SK-N-SH (cell line): ENCODE measurements at regions of chr5 and their contacts with region 1.

Region 1: GRCh38 chr5:141524604-141525597 is 36.0 kb downstream of the PCDHGC5 start:
- DNase-seq: peak; percentile 79
- H3K4me3 ChIP-seq: peak overlapping the region; percentile 23 to 52; a peak in 3 of 4 replicates
- H3K27ac ChIP-seq: peak overlapping the region; percentile 99 to 100
- H3K4me1 ChIP-seq: peaks cover 36 to 70% of the 10 kb centered on the region in 2 experiments
- H3K27me3 ChIP-seq: no peaks in the 10 kb centered on the region
- CTCF ChIP-seq: peak; percentile 100
- EP300 ChIP-seq: peak; percentile 81 to 86; a peak in 3 of 4 replicates
- RAD21 ChIP-seq: peak; percentile 98

Region 2: DNA sequence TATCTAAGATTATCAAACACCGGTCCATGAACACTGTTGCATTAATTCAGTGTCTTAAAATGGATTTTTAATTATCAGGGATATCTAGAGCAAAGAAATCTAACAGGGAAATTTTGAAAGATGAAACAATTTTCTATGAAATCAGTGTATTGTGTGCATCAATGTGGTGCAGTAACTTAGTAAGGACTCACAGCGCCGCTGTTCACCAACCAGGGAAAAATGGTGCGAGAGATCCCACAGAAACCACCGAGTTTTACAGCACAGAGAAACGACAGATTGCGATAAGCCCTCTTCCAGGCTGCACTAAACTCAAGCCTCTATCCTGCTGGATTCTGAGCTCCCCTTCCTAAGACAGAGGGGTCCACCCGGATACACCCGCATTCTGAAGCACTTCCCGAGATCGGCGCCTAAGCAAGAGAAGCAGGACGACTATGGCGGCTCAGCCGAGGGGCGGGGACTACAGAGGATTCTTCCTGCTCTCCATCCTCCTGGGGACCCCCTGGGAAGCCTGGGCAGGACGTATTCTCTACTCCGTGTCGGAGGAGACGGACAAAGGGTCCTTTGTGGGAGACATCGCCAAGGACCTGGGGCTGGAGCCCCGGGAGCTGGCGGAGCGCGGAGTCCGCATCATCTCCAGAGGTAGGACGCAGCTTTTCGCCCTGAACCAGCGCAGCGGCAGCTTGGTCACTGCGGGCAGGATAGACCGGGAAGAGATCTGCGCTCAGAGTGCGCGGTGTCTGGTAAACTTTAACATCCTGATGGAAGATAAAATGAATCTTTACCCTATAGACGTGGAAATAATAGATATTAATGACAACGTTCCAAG is 142.2 kb before region 1 on chr5 and contains the start of gene PCDHGA7:
- CTCF ChIA-PET with region 1: interaction called, 13 read pairs
- POLR2A ChIA-PET with region 1: no interaction called
- DNase-seq: peak; percentile 70
- H3K4me3 ChIP-seq: peak within 1 kb of the TSS; percentile 53 to 62
- H3K27ac ChIP-seq: peak within 1 kb of the TSS; percentile 55 to 83
- H3K4me1 ChIP-seq: no peaks in the 10 kb centered on the region; a peak in 1 of 4 replicates
- H3K27me3 ChIP-seq: no peaks in the 10 kb centered on the region
- CTCF ChIP-seq: peak; percentile 65
- EP300 ChIP-seq: no peak
- RAD21 ChIP-seq: peak; percentile 83
- polyA plus RNA-seq, gene PCDHGA7: 3.4 and 7.8 TPM in 2 replicates

Region 3: GRCh38 chr5:141475625-141476131 is 49.2 kb before region 1 on chr5 and contains the start of gene PCDHGC3:
- CTCF ChIA-PET with region 1: interaction called, 117 read pairs
- POLR2A ChIA-PET with region 1: interaction called, 6 read pairs
- DNase-seq: peak; percentile 90
- H3K4me3 ChIP-seq: peak within 1 kb of the TSS; percentile 82 to 85
- H3K27ac ChIP-seq: peak within 1 kb of the TSS; percentile 92 to 94
- H3K4me1 ChIP-seq: peaks cover 6 to 34% of the 10 kb centered on the region in 2 experiments; a peak in 3 of 4 replicates
- H3K27me3 ChIP-seq: no peaks in the 10 kb centered on the region
- CTCF ChIP-seq: peak; percentile 45
- EP300 ChIP-seq: peak in 1 of 2 experiments; percentile 38; a peak in 1 of 4 replicates
- RAD21 ChIP-seq: peak; percentile 85
- polyA plus RNA-seq, gene PCDHGC3: 55.8 and 97.0 TPM in 2 replicates

Region 4: DNA sequence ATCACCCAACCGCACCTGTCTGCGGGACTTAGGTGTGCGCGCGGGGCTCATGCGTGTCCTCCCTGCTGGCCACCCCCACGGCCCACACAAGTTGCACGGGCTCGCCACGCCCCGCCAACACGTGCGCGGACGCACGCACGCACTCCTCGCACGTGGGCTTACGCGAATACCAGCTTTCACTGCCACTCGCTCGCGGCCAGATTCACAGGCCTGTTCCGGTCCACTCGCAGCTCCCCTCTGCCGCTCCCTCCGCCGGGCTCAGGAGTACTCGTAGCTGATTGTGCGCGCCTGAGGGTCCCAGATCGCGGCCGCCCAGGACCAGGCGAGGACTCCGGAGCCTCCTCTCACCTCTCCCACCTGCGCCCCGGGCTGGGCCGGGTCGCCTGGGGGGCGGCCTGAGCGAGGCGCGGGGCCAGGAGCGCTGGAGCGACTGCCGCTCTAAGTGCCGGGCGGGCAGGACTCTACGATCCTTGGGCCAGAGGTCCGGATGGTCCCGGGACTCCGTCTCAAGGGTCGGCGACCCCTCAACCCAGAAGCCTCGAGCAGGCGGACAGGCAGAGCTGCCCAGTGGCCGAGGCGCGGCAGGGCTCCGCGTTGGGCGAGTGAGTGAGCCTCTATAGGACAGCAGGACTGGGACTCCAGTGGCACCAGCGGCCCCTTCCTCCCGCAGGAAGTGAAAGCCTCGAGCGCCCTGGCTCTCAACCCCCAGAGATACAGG is 32.6 kb before region 1 on chr5:
- CTCF ChIA-PET with region 1: interaction called, 11 read pairs
- POLR2A ChIA-PET with region 1: no interaction called
- DNase-seq: no peak
- H3K4me3 ChIP-seq: no peak overlapping the region
- H3K27ac ChIP-seq: no peak overlapping the region
- H3K4me1 ChIP-seq: peaks cover 15 to 52% of the 10 kb centered on the region in 2 experiments; a peak in 3 of 4 replicates
- H3K27me3 ChIP-seq: no peaks in the 10 kb centered on the region
- CTCF ChIP-seq: no peak
- EP300 ChIP-seq: no peak
- RAD21 ChIP-seq: no peak

Region 5: DNA sequence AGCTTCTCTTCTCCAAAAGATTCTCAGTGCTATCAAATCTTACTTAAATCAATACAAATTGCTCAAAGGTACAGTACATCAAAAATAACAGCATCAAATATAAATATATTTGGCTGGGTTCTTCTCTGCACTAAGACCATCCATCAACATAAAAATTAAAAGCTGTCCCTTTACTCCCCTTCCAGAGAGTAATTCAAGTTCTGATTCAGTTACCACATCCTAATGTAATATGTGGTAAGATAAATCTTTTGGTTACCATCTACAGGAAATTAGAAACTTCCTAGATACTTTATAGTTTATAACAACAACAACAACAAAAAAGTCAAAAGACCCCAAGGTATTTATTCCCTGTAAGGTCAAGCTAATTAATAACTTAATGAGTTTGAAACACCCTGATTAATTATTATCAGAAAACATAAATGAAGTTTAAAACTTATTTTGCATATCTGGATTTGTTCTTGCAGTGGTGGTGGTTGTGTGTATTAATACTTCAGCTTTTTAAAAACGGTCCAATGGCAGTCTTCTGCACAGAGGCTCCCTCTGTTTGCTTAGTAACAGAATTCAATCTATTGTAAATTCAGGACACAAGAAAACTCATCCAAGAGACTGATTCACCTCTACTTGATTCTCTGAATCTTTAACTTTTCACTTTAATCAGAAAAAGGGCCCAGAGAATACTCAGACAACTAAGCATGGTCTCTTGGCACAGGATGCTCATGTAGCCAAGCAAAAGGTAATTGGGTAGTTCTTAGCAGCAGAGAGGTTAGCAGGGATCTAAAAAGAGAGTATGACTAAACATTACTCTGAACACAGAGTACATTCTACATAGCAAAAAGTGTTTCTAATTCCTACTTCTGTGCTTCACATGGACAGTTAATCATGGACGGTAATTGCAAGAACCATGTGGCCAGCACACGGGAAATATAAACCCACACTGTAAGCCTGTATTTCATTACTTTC is 73.8 kb after region 1 on chr5:
- CTCF ChIA-PET with region 1: no interaction called
- POLR2A ChIA-PET with region 1: no interaction called
- DNase-seq: no peak
- H3K4me3 ChIP-seq: no peak overlapping the region
- H3K27ac ChIP-seq: peak overlapping the region in 1 of 2 experiments; percentile 9; a peak in 1 of 4 replicates
- H3K4me1 ChIP-seq: peaks cover 0 to 5% of the 10 kb centered on the region in 2 experiments; a peak in 1 of 4 replicates
- H3K27me3 ChIP-seq: no peaks in the 10 kb centered on the region
- CTCF ChIP-seq: no peak
- EP300 ChIP-seq: no peak
- RAD21 ChIP-seq: no peak